ENCODE measurements at regions of chr12 and their contacts with region 1.

Region 1: DNA sequence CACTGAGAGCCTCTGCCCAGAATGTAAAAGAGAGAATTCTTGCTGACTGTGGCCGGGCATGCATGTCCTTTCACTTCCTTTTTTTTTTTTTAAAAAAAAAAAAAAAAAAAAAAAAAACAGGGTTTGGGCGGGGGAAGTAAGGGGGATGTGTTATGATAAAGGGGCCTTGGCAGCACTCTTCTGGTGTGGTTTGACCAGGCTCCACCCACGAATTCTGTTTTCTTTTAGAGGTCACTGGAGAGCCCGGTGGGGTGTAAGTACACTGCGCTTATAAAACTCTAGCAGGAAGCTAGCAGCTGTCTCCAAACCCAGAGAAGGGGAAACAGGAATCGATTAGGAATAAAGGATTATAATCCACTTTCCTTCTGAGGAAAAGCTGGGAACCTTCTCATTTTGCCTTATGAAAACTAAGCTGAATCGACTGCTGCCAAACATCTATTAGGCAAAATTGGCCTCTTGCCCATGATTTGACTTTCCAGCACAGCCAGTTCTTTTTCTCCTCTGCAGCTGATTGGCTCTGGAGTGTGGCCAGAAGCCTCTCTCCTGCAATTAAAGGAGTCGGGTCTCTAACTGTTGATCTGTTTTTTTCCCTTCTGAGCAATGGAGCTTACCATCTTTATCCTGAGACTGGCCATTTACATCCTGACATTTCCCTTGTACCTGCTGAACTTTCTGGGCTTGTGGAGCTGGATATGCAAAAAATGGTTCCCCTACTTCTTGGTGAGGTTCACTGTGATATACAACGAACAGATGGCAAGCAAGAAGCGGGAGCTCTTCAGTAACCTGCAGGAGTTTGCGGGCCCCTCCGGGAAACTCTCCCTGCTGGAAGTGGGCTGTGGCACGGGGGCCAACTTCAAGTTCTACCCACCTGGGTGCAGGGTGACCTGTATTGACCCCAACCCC is 27.7 kb upstream of the HIGD1C start:
- DNase-seq: peak; percentile 92
- H3K4me3 ChIP-seq: peak overlapping the region; percentile 35 to 66 (median 64)
- H3K27ac ChIP-seq: peak overlapping the region; percentile 91 to 96 (median 92)
- H3K4me1 ChIP-seq: peaks cover 15 to 60% (median 36%) of the 10 kb centered on the region in 4 donors
- H3K27me3 ChIP-seq: no peaks in the 10 kb centered on the region
- CTCF ChIP-seq: no peak
- EP300 ChIP-seq: peak; percentile 1
- POLR2A ChIP-seq: peak; percentile 58

Region 2: GRCh38 chr12:50986966-50987737 is 62.5 kb after region 1 on chr12:
- in situ Hi-C with region 1: no loop called
- intact Hi-C with region 1: loop called (anchors 10 kb)
- DNase-seq: peak; percentile 63
- H3K4me3 ChIP-seq: no peak overlapping the region
- H3K27ac ChIP-seq: peak overlapping the region; percentile 54 to 72 (median 68)
- H3K4me1 ChIP-seq: peaks cover 13 to 31% (median 17%) of the 10 kb centered on the region in 4 donors
- H3K27me3 ChIP-seq: no peaks in the 10 kb centered on the region
- CTCF ChIP-seq: peak; percentile 45 to 56 (median 50)
- EP300 ChIP-seq: no peak
- POLR2A ChIP-seq: no peak